ENCODE measurements at regions of chr1 and their contacts with region 1.

Region 1: GRCh38 chr1:20981915-20982314 is 194.8 kb downstream of the EIF4G3 start:
- DNase-seq: no peak

Region 2: GRCh38 chr1:21200767-21201166 is 218.9 kb after region 1 on chr1:
- CTCF ChIA-PET with region 1: interaction called, 10 read pairs
- POLR2A ChIA-PET with region 1: no interaction called
- DNase-seq: no peak